MCF 10A (cell line): ENCODE measurements at regions of chr10 and their contacts with region 1.

Region 1: DNA sequence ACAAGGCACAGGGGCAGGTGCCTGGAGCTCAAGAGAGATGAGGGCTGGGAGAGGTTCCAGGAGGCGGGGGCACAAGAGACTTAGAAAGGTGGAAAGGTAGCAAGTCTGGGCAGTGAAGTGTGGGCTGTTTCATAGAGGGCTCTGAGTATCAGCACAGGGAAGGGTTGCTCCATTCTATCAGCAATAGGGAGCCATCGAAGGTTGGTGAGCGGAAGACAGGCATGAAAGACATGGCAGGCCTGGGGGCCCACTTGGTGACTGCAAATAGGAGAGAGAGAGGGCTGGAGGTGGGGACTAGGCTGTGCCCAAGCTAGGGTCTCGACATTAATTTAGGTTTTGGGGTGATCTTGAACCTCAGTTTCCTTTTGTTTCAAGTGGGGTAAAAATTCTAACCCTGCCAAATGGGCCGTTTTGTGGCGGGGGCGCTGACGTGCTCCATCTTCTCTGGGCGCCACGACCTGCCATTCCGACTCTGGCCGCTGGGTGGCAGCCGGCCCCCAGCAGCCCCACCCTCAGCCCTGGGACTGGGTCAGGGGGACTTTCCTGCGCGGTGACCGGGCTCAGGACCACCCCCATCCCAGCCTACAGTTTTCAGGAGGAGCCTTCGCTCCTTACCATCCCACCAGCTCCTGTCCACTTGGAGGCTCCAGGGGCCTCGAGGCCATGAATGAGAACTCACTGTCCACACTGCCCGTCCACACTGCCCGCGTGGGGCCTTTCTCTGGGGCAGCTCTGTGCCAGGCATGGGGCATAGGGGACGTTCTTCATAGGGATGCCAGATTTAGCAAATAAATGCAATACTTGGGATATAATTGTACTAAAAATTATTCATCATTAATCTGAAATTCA is 37.2 kb upstream of the PCBD1 start:
- DNase-seq: peak; percentile 36
- H3K4me3 Mint-ChIP-seq: no peak overlapping the region
- H3K27ac Mint-ChIP-seq: no peak overlapping the region
- H3K4me1 Mint-ChIP-seq: peaks cover 7% of the 10 kb centered on the region
- H3K27me3 Mint-ChIP-seq: peaks cover 37% of the 10 kb centered on the region
- CTCF ChIP-seq: peak; percentile 94

Region 2: GRCh38 chr10:70849582-70850016 is 76.0 kb before region 1 on chr10:
- CTCF ChIA-PET with region 1: no interaction called
- POLR2A ChIA-PET with region 1: no interaction called
- intact Hi-C with region 1: no loop called
- DNase-seq: peak; percentile 20
- H3K4me3 Mint-ChIP-seq: no peak overlapping the region
- H3K27ac Mint-ChIP-seq: no peak overlapping the region
- H3K4me1 Mint-ChIP-seq: peaks cover 20% of the 10 kb centered on the region
- H3K27me3 Mint-ChIP-seq: no peaks in the 10 kb centered on the region
- CTCF ChIP-seq: no peak

Region 3: DNA sequence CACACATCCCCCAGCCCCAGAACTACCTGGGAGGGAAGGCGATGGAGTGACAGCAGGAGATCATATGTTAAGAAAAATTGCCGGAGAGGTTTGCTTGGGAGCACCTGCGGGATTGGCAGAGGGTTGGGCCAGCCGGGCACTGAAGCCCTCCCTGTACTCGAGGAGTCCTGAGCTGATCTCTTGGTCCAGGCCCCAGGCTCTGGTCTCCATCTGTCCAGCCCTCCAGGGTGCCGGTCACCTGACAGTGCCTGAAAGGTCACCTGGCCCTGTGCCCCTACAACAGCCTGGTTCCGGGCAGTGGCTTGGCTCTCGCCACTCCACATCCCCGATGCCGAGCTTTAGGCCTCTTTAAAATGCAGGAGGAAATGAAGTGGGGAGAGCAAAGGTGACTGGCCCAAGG is 10.0 kb after region 1 on chr10:
- CTCF ChIA-PET with region 1: interaction called, 16 read pairs
- POLR2A ChIA-PET with region 1: no interaction called
- intact Hi-C with region 1: no loop called
- DNase-seq: no peak
- H3K4me3 Mint-ChIP-seq: no peak overlapping the region
- H3K27ac Mint-ChIP-seq: no peak overlapping the region
- H3K4me1 Mint-ChIP-seq: no peaks in the 10 kb centered on the region
- H3K27me3 Mint-ChIP-seq: peaks cover 57% of the 10 kb centered on the region
- CTCF ChIP-seq: no peak

Region 4: DNA sequence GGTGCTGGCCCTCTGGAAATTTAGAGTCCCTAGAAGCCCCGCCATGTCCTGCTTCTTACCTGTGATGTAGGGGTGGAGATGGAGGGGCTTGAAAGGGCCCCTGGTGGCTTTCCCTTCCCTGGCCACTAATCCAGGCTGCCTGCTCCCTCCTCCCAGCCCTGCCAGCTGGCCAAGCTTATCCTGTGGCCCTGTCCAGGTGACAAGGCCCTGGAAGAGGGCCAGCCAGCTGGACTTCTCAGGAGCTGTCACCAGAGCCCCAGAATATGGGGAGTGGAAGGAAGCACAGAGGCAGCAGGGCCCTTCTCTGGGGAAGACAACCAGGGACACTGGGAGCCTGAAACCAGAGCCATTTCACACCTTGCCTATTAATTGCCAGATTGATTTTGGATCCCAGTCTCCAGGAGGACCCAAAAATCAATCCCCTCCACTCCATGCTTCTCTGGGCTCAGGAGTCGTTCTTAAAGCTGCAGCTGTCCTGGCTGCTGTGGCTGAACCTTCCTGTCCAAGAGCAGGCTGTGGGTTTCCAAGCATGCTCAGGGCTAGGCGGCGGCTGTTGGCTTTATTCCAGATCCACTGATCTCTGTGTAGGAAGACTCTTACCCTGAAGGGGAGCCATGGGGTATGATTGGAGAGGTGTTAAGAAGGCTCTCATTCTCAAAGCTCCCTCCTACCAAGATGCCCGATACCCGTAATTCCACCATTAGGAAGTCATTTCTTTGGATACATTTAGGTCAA is 15.4 kb after region 1 on chr10:
- CTCF ChIA-PET with region 1: interaction called, 16 read pairs
- POLR2A ChIA-PET with region 1: no interaction called
- intact Hi-C with region 1: no loop called
- DNase-seq: peak; percentile 23
- H3K4me3 Mint-ChIP-seq: no peak overlapping the region
- H3K27ac Mint-ChIP-seq: no peak overlapping the region
- H3K4me1 Mint-ChIP-seq: no peaks in the 10 kb centered on the region
- H3K27me3 Mint-ChIP-seq: peaks cover 49% of the 10 kb centered on the region
- CTCF ChIP-seq: no peak

Region 5: GRCh38 chr10:71205468-71205867 is 279.9 kb after region 1 on chr10:
- CTCF ChIA-PET with region 1: interaction called, 44 read pairs
- POLR2A ChIA-PET with region 1: interaction called, 3 read pairs
- intact Hi-C with region 1: loop called (anchors 1 kb)
- DNase-seq: no peak
- H3K4me3 Mint-ChIP-seq: no peak overlapping the region
- H3K27ac Mint-ChIP-seq: no peak overlapping the region
- H3K4me1 Mint-ChIP-seq: peaks cover 4% of the 10 kb centered on the region
- H3K27me3 Mint-ChIP-seq: peaks cover 11% of the 10 kb centered on the region
- CTCF ChIP-seq: no peak

Region 6: GRCh38 chr10:71270301-71271220 is 345.0 kb after region 1 on chr10:
- CTCF ChIA-PET with region 1: interaction called, 8 read pairs
- POLR2A ChIA-PET with region 1: interaction called, 3 read pairs
- intact Hi-C with region 1: loop called (anchors 5 kb)
- DNase-seq: peak; percentile 72
- H3K4me3 Mint-ChIP-seq: no peak overlapping the region
- H3K27ac Mint-ChIP-seq: peak overlapping the region; percentile 90
- H3K4me1 Mint-ChIP-seq: peaks cover 44% of the 10 kb centered on the region
- H3K27me3 Mint-ChIP-seq: no peaks in the 10 kb centered on the region
- CTCF ChIP-seq: peak; percentile 46

Region 7: DNA sequence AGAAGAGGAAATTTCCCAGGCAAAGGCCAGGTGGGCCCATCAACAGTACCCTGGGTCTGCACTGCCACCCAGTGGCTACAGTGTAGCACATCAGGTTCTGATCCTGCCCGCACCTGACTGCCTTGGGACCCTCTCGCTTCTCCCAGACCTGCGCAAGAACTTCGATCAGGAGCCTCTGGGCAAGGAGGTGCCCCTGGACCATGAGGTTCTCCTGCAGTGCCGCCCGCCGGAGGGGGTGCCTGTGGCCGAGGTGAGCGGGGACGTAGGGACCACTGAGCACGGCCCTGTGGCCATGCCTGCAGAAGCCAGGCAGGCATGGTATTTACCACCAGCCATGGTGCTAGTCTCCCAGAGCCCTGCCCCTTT is 359.6 kb after region 1 on chr10:
- CTCF ChIA-PET with region 1: interaction called, 45 read pairs
- POLR2A ChIA-PET with region 1: no interaction called
- intact Hi-C with region 1: loop called (anchors 1 kb)
- DNase-seq: peak; percentile 55
- H3K4me3 Mint-ChIP-seq: no peak overlapping the region
- H3K27ac Mint-ChIP-seq: no peak overlapping the region
- H3K4me1 Mint-ChIP-seq: no peaks in the 10 kb centered on the region
- H3K27me3 Mint-ChIP-seq: no peaks in the 10 kb centered on the region
- CTCF ChIP-seq: peak; percentile 71

Region 8: GRCh38 chr10:71359364-71360046 is 433.9 kb after region 1 on chr10:
- CTCF ChIA-PET with region 1: no interaction called
- POLR2A ChIA-PET with region 1: no interaction called
- intact Hi-C with region 1: no loop called
- DNase-seq: no peak
- H3K4me3 Mint-ChIP-seq: no peak overlapping the region
- H3K27ac Mint-ChIP-seq: no peak overlapping the region
- H3K4me1 Mint-ChIP-seq: peaks cover 10% of the 10 kb centered on the region
- H3K27me3 Mint-ChIP-seq: no peaks in the 10 kb centered on the region
- CTCF ChIP-seq: no peak

Region 9: DNA sequence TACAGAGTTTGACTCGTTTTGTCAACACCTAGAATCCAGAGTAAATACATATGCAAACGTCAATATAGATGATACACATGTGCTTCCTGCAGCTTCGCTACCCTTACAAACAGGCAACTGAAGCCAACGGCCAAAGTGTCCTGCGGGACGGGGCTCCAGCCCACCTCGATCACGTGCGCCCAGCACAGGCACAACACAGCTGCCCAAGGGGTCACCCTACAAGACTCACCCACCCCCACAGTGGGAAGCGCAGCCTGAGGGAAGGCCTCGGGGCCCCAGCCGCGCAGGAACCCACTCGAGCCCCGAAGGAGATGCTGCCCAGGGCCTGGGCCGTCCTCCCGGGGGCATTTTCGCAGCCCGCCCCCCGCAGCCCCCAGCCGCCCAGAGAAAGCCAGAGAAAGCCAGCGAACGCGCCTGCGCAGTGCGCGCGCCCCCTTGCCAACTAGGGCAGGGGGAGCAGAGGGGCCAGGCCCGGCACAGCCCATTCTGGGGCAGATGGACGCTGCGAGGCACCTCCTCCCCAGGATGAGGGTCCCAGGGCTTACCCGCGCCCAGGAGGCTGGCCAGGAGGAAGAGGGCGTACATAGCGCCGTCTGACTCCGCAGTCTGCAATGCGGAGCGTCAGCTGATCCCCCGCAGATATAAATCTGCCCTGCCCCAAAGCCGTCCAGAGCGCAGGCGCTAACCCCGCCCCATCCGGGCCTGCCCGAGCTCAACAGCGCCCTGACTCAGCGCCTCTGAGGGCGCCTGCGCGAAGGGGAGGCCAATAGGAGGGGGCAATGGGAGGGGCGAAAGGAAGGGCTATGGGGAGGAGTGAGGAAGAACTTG is 925.2 kb after region 1 on chr10 and contains the start of gene PSAP:
- CTCF ChIA-PET with region 1: no interaction called
- POLR2A ChIA-PET with region 1: no interaction called
- intact Hi-C with region 1: no loop called
- DNase-seq: peak; percentile 99
- H3K4me3 Mint-ChIP-seq: peak within 1 kb of the TSS; percentile 80
- H3K27ac Mint-ChIP-seq: peak within 1 kb of the TSS; percentile 94
- H3K4me1 Mint-ChIP-seq: peaks cover 42% of the 10 kb centered on the region
- H3K27me3 Mint-ChIP-seq: no peaks in the 10 kb centered on the region
- CTCF ChIP-seq: no peak
- total RNA-seq, gene PSAP: 506 and 692 TPM in 2 replicates